PC-9 (cell line): ENCODE measurements at regions of chr2 and their contacts with region 1.

Region 1: GRCh38 chr2:179595284-179595683 is 266.1 kb downstream of the ZNF385B start:
- DNase-seq: no peak
- H3K4me3 ChIP-seq: no peak overlapping the region
- H3K27ac ChIP-seq: no peak overlapping the region
- H3K4me1 ChIP-seq: peaks cover 12% of the 10 kb centered on the region
- H3K27me3 ChIP-seq: no peaks in the 10 kb centered on the region
- CTCF ChIP-seq: no peak

Region 2: GRCh38 chr2:179422037-179422643 is 173.1 kb before region 1 on chr2:
- CTCF ChIA-PET with region 1: no interaction called
- POLR2A ChIA-PET with region 1: no interaction called
- intact Hi-C with region 1: loop called (anchors 5 kb)
- DNase-seq: peak; percentile 56 to 83
- H3K4me3 ChIP-seq: no peak overlapping the region
- H3K27ac ChIP-seq: no peak overlapping the region
- H3K4me1 ChIP-seq: no peaks in the 10 kb centered on the region
- H3K27me3 ChIP-seq: no peaks in the 10 kb centered on the region
- CTCF ChIP-seq: peak; percentile 88

Region 3: GRCh38 chr2:179612108-179612507 is 16.8 kb after region 1 on chr2:
- CTCF ChIA-PET with region 1: no interaction called
- POLR2A ChIA-PET with region 1: no interaction called
- intact Hi-C with region 1: loop called (anchors 1 kb)
- DNase-seq: no peak
- H3K4me3 ChIP-seq: no peak overlapping the region
- H3K27ac ChIP-seq: no peak overlapping the region
- H3K4me1 ChIP-seq: no peaks in the 10 kb centered on the region
- H3K27me3 ChIP-seq: no peaks in the 10 kb centered on the region
- CTCF ChIP-seq: no peak

Region 4: DNA sequence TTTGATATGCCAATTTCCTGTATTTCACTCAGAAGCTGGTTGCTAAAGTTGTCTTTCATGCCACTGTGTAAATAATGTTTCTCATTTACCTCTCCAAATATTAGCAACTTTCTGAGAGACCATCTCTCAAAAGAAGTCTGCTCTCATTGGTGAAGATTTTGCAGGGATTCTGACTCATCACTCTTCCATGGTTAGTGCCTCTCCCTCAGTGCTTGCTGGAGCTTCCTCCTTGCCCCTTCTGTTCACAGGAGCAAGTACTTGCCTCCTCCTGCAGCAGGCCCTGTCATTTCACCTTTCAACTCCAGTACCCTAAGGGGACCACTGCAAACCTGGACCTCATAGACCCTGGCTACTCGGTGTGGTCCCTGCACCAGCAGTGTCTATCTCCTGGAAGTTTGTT is 97.3 kb after region 1 on chr2:
- CTCF ChIA-PET with region 1: no interaction called
- POLR2A ChIA-PET with region 1: no interaction called
- intact Hi-C with region 1: loop called (anchors 1 kb)
- DNase-seq: peak in 1 of 2 experiments; percentile 16
- H3K4me3 ChIP-seq: no peak overlapping the region
- H3K27ac ChIP-seq: no peak overlapping the region
- H3K4me1 ChIP-seq: no peaks in the 10 kb centered on the region
- H3K27me3 ChIP-seq: no peaks in the 10 kb centered on the region
- CTCF ChIP-seq: no peak

Region 5: GRCh38 chr2:179711375-179711774 is 116.1 kb after region 1 on chr2:
- CTCF ChIA-PET with region 1: no interaction called
- POLR2A ChIA-PET with region 1: no interaction called
- intact Hi-C with region 1: loop called (anchors 1 kb)
- DNase-seq: peak; percentile 59 to 80
- H3K4me3 ChIP-seq: no peak overlapping the region
- H3K27ac ChIP-seq: no peak overlapping the region
- H3K4me1 ChIP-seq: no peaks in the 10 kb centered on the region; the same call in 1 of the 2 replicates
- H3K27me3 ChIP-seq: no peaks in the 10 kb centered on the region
- CTCF ChIP-seq: no peak

Region 6: GRCh38 chr2:179726461-179727180 is 131.3 kb after region 1 on chr2:
- CTCF ChIA-PET with region 1: interaction called, 10 read pairs
- POLR2A ChIA-PET with region 1: no interaction called
- intact Hi-C with region 1: no loop called
- DNase-seq: no peak
- H3K4me3 ChIP-seq: no peak overlapping the region
- H3K27ac ChIP-seq: no peak overlapping the region
- H3K4me1 ChIP-seq: no peaks in the 10 kb centered on the region
- H3K27me3 ChIP-seq: no peaks in the 10 kb centered on the region
- CTCF ChIP-seq: no peak

Region 7: DNA sequence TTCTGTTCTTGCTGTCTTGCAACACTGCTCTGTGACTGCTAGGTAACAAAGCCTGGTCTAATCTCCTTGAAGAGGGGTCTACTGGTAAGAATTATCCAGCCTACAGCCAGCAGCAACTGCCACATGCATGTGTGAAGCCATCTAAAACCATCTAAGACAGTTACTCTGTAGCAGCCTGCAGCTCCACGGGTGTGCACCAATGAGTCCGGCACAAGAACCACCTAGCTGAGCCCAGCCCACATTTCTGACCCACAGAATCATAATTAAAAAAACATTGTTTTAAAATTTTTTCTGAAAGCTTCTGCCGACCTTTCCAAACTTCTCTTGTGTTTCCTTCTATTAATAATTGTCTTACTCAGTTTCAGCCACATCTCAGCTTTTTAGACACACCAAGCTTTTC is 163.4 kb after region 1 on chr2:
- CTCF ChIA-PET with region 1: no interaction called
- POLR2A ChIA-PET with region 1: interaction called, 11 read pairs
- intact Hi-C with region 1: no loop called
- DNase-seq: no peak
- H3K4me3 ChIP-seq: no peak overlapping the region
- H3K27ac ChIP-seq: no peak overlapping the region
- H3K4me1 ChIP-seq: no peaks in the 10 kb centered on the region
- H3K27me3 ChIP-seq: no peaks in the 10 kb centered on the region
- CTCF ChIP-seq: no peak